ENCODE measurements at regions of chr15 and their contacts with region 1.

Region 1: GRCh38 chr15:78108299-78109084 is 16.1 kb downstream of the SH2D7 start:
- DNase-seq: peak; percentile 91
- H3K4me3 Mint-ChIP-seq: no peak overlapping the region
- H3K27ac Mint-ChIP-seq: peak overlapping the region; percentile 64
- H3K4me1 Mint-ChIP-seq: peaks cover 56% of the 10 kb centered on the region
- H3K27me3 Mint-ChIP-seq: no peaks in the 10 kb centered on the region

Region 2: GRCh38 chr15:77676569-77677375 is 431.7 kb before region 1 on chr15:
- CTCF ChIA-PET with region 1: no interaction called
- POLR2A ChIA-PET with region 1: no interaction called
- DNase-seq: no peak
- H3K4me3 Mint-ChIP-seq: no peak overlapping the region
- H3K27ac Mint-ChIP-seq: no peak overlapping the region
- H3K4me1 Mint-ChIP-seq: no peaks in the 10 kb centered on the region
- H3K27me3 Mint-ChIP-seq: peaks cover 7% of the 10 kb centered on the region

Region 3: GRCh38 chr15:77966540-77967290 is 141.8 kb before region 1 on chr15:
- CTCF ChIA-PET with region 1: interaction called, 27 read pairs
- POLR2A ChIA-PET with region 1: no interaction called
- DNase-seq: peak; percentile 57
- H3K4me3 Mint-ChIP-seq: no peak overlapping the region
- H3K27ac Mint-ChIP-seq: no peak overlapping the region
- H3K4me1 Mint-ChIP-seq: peaks cover 7% of the 10 kb centered on the region
- H3K27me3 Mint-ChIP-seq: peaks cover 27% of the 10 kb centered on the region

Region 4: GRCh38 chr15:78021761-78022160 is 86.7 kb before region 1 on chr15:
- CTCF ChIA-PET with region 1: no interaction called
- POLR2A ChIA-PET with region 1: no interaction called
- DNase-seq: no peak
- H3K4me3 Mint-ChIP-seq: no peak overlapping the region
- H3K27ac Mint-ChIP-seq: no peak overlapping the region
- H3K4me1 Mint-ChIP-seq: peaks cover 28% of the 10 kb centered on the region
- H3K27me3 Mint-ChIP-seq: no peaks in the 10 kb centered on the region

Region 5: DNA sequence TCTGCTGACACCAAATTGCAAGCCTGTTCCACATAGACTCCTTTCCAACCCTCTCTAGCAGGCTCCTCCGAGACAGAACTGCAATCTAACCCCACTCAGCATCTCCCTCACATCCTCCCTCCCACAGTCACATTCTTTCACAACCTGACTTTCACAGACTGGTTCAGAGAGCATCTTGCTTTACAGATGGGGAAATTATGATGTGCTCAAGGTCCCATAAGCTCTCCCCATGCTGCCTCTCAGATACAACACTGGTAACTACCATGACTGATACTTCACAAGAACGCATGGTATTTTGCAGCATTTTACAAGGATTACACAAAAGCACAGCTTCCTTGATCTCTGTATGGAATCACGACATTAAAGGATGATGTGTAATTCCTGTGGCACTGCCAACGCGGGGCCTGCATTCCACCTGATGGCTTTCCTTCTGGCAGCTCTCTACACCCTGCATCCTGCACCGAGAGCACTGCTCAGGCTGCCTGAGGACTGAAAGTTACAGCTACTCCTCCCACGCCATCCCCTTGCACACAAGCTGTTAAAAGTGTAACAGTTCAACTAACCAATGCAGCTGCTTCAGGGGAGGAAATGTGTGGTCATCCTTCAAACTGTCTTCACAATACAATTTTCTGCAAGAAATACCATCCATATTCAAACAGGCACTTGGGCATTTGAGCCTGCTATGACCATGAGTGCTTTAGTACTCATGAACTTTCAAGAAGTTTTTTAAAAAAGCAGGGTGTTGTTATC is 58.6 kb before region 1 on chr15:
- CTCF ChIA-PET with region 1: interaction called, 12 read pairs
- POLR2A ChIA-PET with region 1: no interaction called
- DNase-seq: peak; percentile 73
- H3K4me3 Mint-ChIP-seq: peak overlapping the region; percentile 51
- H3K27ac Mint-ChIP-seq: peak overlapping the region; percentile 87
- H3K4me1 Mint-ChIP-seq: peaks cover 97% of the 10 kb centered on the region
- H3K27me3 Mint-ChIP-seq: no peaks in the 10 kb centered on the region

Region 6: GRCh38 chr15:78082106-78083078 is 26.1 kb before region 1 on chr15:
- CTCF ChIA-PET with region 1: interaction called, 11 read pairs
- POLR2A ChIA-PET with region 1: no interaction called
- DNase-seq: no peak
- H3K4me3 Mint-ChIP-seq: no peak overlapping the region
- H3K27ac Mint-ChIP-seq: no peak overlapping the region
- H3K4me1 Mint-ChIP-seq: peaks cover 32% of the 10 kb centered on the region
- H3K27me3 Mint-ChIP-seq: no peaks in the 10 kb centered on the region

Region 7: DNA sequence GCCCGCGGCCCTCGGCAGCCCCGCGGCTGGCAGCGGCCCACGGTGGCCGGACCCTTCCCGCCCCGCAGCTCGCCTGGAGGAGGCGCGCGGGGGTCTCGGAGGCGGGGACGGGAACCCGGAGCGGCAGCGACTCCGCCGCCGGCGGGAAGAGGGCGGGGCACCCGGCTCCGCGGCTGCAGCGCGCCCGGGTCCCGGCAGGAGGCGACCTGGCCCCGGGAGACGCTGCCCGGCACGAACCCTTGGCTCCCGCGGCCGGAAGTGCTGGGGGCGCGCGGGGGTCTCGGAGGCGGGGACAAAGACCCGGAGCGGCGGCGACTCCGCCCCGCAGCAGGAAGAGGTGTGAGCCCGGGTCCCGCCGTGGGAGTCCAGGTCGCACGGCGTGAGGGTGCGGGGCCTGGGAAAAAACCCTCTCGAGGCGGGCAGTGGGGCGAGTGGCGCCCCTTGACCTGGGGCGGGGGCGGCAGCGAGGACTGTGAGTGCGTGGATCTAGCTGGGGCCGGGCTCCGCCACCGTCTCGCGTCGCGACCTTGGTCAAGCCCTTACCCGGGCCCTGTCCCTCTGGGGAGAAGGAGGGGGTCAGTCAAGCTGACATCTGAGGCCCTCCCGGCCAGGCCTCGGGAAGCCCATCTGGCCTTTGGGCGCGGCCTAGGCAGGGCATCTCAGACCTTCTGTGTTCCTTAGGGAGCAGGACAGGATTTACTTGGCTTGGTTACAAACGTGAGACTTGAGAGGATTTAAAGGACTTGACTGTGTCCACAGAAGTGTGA is 23.0 kb after region 1 on chr15 and contains the start of gene CIB2:
- CTCF ChIA-PET with region 1: interaction called, 15 read pairs
- POLR2A ChIA-PET with region 1: no interaction called
- DNase-seq: peak; percentile 74
- H3K4me3 Mint-ChIP-seq: peak within 1 kb of the TSS; percentile 74
- H3K27ac Mint-ChIP-seq: peak within 1 kb of the TSS; percentile 82
- H3K4me1 Mint-ChIP-seq: peaks cover 26% of the 10 kb centered on the region
- H3K27me3 Mint-ChIP-seq: no peaks in the 10 kb centered on the region
- total RNA-seq, gene CIB2: 0.44 to 0.55 TPM

Region 8: DNA sequence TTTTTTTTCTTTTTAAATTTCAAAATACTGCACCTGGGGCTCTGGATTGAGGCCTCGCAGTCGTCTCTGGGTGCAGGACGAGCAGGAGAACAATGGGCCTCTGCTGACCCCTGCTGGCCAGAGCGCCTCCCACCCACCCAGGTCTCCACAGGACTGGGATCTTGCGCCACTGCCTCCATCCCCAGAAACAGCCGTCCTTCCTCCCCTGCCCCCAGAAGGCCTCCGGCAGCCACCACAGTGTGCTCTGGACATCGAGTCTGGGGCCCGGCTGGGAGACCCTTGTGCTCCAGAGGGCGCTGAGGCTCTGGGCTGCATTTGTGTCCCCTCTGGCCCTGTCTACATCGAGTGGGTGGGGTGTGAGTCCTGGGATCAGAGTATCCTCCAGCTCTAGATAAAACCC is 132.5 kb after region 1 on chr15:
- CTCF ChIA-PET with region 1: interaction called, 44 read pairs
- POLR2A ChIA-PET with region 1: no interaction called
- DNase-seq: peak; percentile 85
- H3K4me3 Mint-ChIP-seq: no peak overlapping the region
- H3K27ac Mint-ChIP-seq: no peak overlapping the region
- H3K4me1 Mint-ChIP-seq: peaks cover 2% of the 10 kb centered on the region
- H3K27me3 Mint-ChIP-seq: peaks cover 6% of the 10 kb centered on the region